AG04450 (cell line): ENCODE measurements at regions of chr16 and their contacts with region 1.

Region 1: DNA sequence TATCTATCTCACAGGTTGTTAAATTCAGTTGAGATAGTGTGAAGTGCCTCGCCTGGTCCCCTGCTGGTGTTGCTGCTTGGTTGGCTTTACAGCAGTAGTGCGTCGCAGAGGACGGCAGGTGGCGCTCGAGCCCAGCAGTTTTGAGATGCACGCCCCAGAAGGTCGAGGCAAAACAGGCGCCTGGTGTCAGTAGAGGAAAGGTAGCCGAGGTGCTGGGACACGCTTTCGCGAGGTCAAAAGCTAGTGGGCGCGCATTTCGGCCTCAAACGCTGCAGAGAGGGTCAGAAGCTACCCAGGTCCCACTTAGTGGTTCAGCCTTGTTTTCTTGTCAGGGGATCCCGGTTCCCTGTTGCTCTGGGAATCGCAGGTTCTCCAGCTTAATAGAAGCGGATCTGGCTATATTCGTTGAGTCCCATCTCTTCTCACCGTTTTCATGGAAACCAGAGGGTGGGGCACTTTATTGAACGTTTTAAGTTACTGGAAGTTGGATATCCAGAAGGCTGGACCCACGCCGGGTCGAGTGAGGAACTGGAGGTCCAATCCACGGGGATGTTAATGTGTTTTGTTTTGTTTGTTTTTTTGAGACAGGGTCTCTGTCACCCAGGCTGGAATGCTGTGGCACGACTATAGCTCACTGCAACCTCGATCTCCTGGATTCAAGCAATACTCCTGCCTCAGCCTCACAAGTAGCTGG is 10.3 kb upstream of the ZFP90 start:
- DNase-seq: peak; percentile 44
- H3K4me3 ChIP-seq: no peak overlapping the region
- H3K27ac ChIP-seq: no peak overlapping the region
- H3K27me3 ChIP-seq: no peaks in the 10 kb centered on the region
- CTCF ChIP-seq: peak; percentile 83

Region 2: DNA sequence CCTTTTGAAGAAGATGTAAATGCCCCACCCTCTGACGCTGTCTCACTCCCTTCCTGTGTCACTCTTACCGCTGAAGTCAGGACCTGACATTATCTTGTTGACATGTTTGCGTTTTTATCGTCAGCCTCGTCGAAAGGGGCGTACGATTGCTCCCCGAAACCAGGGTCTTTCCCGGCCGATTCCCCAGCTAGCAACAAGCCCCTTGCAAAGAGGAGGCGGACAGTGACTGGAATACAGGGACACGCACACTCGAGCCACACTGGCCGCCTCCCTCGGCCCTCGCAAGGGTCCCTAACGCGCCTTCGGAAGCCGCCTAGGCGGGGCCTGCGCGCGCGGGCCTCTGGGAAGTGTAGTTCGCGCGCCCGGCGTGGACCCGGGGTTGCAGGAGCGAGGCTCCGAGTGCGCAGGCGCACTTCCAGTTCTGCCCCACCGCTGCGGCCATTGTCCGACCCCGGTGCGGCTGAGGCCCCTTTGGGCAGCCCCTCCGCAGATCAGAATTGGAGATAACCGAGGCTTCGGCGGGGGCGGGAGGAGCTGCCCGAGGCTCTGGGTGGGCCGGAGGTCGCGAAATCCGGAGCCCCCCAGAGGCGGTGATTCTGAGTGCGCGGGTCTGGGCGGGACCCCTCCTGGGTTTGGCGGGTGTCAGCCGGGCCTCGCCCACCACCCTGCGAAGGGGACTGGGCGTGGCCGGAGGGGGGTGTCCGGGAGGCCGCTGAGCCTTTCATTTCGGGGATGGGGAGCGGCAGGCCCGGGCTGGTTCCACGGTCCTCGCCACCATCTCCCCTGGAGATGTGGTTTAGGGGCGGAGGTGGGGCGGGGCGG is 10.3 kb after region 1 on chr16 and contains the start of gene ZFP90:
- CTCF ChIA-PET with region 1: interaction called, 15 read pairs
- POLR2A ChIA-PET with region 1: no interaction called
- DNase-seq: peak; percentile 62
- H3K4me3 ChIP-seq: peak within 1 kb of the TSS; percentile 75
- H3K27ac ChIP-seq: no peak within 1 kb of the TSS
- H3K27me3 ChIP-seq: no peaks in the 10 kb centered on the region
- CTCF ChIP-seq: no peak
- polyA plus RNA-seq, gene ZFP90: 21.4 and 25.2 TPM in 2 replicates

Region 3: DNA sequence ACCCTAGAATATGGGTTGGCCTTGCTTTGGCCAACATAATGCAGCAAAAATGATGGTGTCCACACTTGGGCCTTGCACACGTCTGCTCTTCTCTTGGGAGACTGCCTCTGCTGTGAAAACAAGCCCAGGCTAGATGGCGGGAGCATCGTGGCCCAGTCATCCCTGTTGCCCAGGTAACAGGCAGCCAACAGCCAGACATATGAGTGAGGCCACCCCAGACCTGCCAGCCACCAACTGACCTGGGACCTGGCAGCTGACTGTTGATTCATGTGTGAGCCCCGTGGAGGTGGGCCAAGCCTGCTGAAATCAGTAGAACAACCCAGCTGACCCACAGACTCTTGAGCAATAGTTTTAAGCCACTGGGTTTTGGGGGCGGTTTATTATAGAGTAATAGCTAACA is 76.9 kb after region 1 on chr16:
- CTCF ChIA-PET with region 1: no interaction called
- POLR2A ChIA-PET with region 1: no interaction called
- DNase-seq: no peak
- H3K4me3 ChIP-seq: no peak overlapping the region
- H3K27ac ChIP-seq: no peak overlapping the region
- H3K27me3 ChIP-seq: no peaks in the 10 kb centered on the region
- CTCF ChIP-seq: no peak

Region 4: DNA sequence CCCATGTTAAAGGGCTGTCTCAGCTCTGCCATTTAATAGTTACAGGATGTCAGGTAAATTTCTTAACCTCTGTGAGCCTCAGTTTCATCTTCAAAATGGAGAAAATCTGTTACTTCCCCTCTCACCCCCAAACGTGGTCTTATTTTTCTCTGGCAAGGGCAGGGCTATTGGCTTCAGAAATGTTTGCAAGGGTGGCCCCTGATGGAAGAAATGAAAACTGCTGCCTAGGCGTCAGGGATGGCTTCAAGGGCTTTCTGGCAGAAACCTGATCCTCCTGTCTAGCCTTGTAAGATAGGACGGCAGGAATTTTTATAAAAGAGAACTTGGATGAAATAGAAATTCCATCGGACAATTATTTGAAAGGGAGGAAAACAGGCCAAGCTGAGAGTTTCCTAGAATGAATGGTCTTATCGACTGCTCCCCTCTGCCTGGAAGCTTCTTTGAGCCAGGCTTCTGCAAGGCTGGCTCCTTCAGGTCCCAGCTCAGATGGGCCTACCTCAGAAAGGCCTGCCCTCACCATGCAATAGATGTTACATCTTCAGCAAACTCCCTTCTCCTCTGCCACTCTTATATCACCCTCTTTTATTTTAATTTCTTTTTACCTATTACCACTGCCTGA is 271.5 kb after region 1 on chr16:
- CTCF ChIA-PET with region 1: interaction called, 12 read pairs
- POLR2A ChIA-PET with region 1: no interaction called
- DNase-seq: peak; percentile 66
- H3K4me3 ChIP-seq: no peak overlapping the region
- H3K27ac ChIP-seq: no peak overlapping the region
- H3K27me3 ChIP-seq: peaks cover 6% of the 10 kb centered on the region
- CTCF ChIP-seq: peak; percentile 89